PC-9 (cell line): ENCODE measurements at regions of chr2 and their contacts with region 1.

Region 1: DNA sequence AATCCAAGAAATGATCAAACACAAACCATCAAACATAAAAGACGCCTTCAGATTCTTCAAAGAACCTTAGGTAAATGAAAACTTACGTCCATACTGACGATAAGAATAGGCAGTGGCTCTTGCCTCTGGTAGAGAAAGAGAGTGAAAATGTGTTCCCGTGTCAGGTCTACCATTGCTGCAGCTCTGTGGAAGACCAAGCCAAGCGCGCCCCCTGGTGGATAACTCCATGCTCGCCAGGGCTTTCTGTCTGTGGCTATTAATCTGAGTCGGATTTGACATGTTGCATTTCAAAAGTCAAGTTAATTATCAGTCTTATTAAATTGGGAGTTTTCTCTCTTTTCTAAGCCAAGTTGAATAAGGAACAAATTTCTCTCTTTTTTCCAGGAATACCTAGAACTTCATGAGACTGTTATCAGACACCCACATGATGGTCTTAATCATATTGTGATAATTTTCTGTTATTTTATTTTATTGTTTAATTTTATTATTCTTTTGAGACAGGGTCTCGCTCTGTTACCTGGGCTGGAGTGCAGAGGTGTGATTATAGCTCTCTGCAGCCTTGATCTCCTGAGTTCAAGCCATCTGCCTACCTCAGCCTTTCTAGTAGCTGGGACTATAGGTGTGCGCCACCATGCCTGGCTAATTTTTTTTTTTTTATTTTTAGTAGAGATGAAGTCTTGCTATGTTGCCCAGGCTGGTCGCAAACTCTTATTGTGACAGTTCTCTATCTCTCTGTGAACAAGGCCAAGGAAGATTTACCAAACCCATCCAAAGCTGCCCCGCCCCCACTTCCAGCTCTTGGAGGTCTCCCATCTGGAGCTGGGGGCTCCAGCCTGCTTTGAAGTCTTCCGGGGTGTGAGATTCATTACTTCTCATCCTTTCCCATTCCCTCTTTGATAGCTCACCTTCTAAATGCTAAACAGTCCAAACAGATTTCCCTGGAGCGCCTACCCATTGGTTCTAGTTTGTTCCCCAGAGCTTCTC is 15.8 kb upstream of the ZAP70 start:
- DNase-seq: peak; percentile 70 to 88
- H3K4me3 ChIP-seq: peak overlapping the region; percentile 1; the same call in 1 of the 2 replicates
- H3K27ac ChIP-seq: no peak overlapping the region
- H3K4me1 ChIP-seq: no peaks in the 10 kb centered on the region
- H3K27me3 ChIP-seq: no peaks in the 10 kb centered on the region
- CTCF ChIP-seq: peak; percentile 99

Region 2: GRCh38 chr2:97645695-97646629 is 51.6 kb before region 1 on chr2 and contains the start of gene COX5B:
- CTCF ChIA-PET with region 1: interaction called, 3 read pairs
- POLR2A ChIA-PET with region 1: no interaction called
- intact Hi-C with region 1: loop called (anchors 5 kb)
- DNase-seq: peak; percentile 97 to 99
- H3K4me3 ChIP-seq: peak within 1 kb of the TSS; percentile 72
- H3K27ac ChIP-seq: peak within 1 kb of the TSS; percentile 53
- H3K4me1 ChIP-seq: peaks cover 10% of the 10 kb centered on the region
- H3K27me3 ChIP-seq: no peaks in the 10 kb centered on the region
- CTCF ChIP-seq: no peak
- total RNA-seq, gene COX5B: 310 and 345 TPM in 2 replicates

Region 3: DNA sequence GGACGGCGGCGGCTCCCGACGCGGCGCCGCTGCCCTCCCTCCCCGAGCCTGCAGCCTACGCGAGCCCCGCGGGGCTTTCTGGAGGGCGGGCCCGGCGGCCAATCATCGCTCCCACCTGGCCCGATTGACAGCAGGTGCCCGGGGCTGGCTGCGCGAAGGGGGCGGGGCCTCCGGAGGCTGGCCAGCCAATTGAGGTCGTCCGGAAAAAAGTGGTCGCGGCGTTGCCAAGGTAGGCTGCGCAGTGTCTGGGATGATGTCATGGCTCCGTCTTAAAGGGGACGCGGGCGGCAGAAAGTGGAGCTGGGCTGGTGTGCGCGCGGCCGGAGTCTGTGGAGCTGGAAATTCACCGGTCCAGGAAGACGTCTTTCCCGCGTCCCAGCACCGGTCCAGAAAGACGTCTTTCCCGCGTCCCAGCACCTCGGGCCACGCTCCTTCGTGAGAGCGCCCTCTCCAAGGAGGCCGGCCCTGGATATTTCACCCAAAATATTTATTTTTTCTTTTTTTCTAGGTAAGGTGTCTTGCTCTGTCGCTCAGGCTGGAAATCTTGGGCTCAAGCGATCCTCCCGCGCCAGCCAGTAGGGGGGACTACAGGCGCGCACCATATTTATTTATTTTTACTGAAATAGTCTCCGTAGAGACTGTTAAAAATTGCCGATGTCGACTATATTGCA is 33.4 kb before region 1 on chr2 and contains the start of gene ACTR1B:
- CTCF ChIA-PET with region 1: interaction called, 10 read pairs
- POLR2A ChIA-PET with region 1: interaction called, 3 read pairs
- intact Hi-C with region 1: loop called (anchors 1 kb)
- DNase-seq: peak; percentile 97 to 99
- H3K4me3 ChIP-seq: peak within 1 kb of the TSS; percentile 75
- H3K27ac ChIP-seq: peak within 1 kb of the TSS; percentile 88
- H3K4me1 ChIP-seq: peaks cover 20% of the 10 kb centered on the region
- H3K27me3 ChIP-seq: no peaks in the 10 kb centered on the region
- CTCF ChIP-seq: peak; percentile 84
- total RNA-seq, gene ACTR1B: 49.9 and 83.5 TPM in 2 replicates

Region 4: GRCh38 chr2:98188351-98189049 is 491.0 kb after region 1 on chr2:
- CTCF ChIA-PET with region 1: interaction called, 4 read pairs
- POLR2A ChIA-PET with region 1: no interaction called
- intact Hi-C with region 1: loop called (anchors 5 kb)
- DNase-seq: peak; percentile 44 to 94
- H3K4me3 ChIP-seq: no peak overlapping the region
- H3K27ac ChIP-seq: no peak overlapping the region
- H3K4me1 ChIP-seq: peaks cover 5% of the 10 kb centered on the region
- H3K27me3 ChIP-seq: no peaks in the 10 kb centered on the region
- CTCF ChIP-seq: peak; percentile 55

Region 5: GRCh38 chr2:98385050-98385699 is 687.6 kb after region 1 on chr2:
- CTCF ChIA-PET with region 1: interaction called, 4 read pairs
- POLR2A ChIA-PET with region 1: no interaction called
- intact Hi-C with region 1: loop called (anchors 1 kb)
- DNase-seq: peak; percentile 63 to 74
- H3K4me3 ChIP-seq: no peak overlapping the region
- H3K27ac ChIP-seq: no peak overlapping the region
- H3K4me1 ChIP-seq: no peaks in the 10 kb centered on the region
- H3K27me3 ChIP-seq: peaks cover 25% of the 10 kb centered on the region
- CTCF ChIP-seq: peak; percentile 99